ENCODE measurements at regions of chr4 and their contacts with region 1.

Region 1: GRCh38 chr4:22969314-22969896 is 276.7 kb downstream of the GBA3 start:
- DNase-seq: peak; percentile 86
- ATAC-seq: peak; percentile 85
- H3K4me3 ChIP-seq: peak overlapping the region; percentile 21; the same call in 1 of the 2 replicates
- H3K27ac ChIP-seq: peak overlapping the region; percentile 81
- H3K4me1 ChIP-seq: peaks cover 32% of the 10 kb centered on the region
- H3K27me3 ChIP-seq: no peaks in the 10 kb centered on the region
- CTCF ChIP-seq: no peak

Region 2: DNA sequence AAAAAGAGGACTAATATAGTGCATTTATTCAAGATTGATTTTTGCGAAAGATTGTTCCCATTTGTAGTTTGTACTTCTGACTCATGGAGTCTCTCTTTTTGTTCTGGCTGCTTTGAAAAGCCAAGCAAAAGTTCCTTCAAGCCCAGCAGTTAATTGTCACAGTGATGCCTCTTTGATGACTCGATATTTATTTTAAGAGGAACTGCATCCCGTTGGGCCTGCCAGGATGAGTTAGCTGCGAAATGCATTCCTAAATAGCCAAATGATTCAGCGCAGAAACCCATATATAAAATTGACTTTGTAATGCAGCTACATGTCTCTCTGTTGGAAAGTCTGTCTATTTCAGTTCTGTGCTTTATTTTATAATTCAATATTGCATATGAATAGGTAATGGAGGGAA is 18.5 kb after region 1 on chr4:
- CTCF ChIA-PET with region 1: no interaction called
- POLR2A ChIA-PET with region 1: interaction called, 4 read pairs
- intact Hi-C with region 1: loop called (anchors 1 kb)
- DNase-seq: peak; percentile 86
- ATAC-seq: peak; percentile 85
- H3K4me3 ChIP-seq: no peak overlapping the region
- H3K27ac ChIP-seq: peak overlapping the region; percentile 55
- H3K4me1 ChIP-seq: peaks cover 36% of the 10 kb centered on the region
- H3K27me3 ChIP-seq: no peaks in the 10 kb centered on the region
- CTCF ChIP-seq: no peak

Region 3: GRCh38 chr4:23022032-23022431 is 52.6 kb after region 1 on chr4:
- CTCF ChIA-PET with region 1: no interaction called
- POLR2A ChIA-PET with region 1: no interaction called
- intact Hi-C with region 1: loop called (anchors 1 kb)
- DNase-seq: peak; percentile 89
- ATAC-seq: peak; percentile 94
- H3K4me3 ChIP-seq: no peak overlapping the region
- H3K27ac ChIP-seq: peak overlapping the region; percentile 78
- H3K4me1 ChIP-seq: peaks cover 15% of the 10 kb centered on the region
- H3K27me3 ChIP-seq: no peaks in the 10 kb centered on the region
- CTCF ChIP-seq: no peak

Region 4: GRCh38 chr4:23039813-23040212 is 70.4 kb after region 1 on chr4:
- CTCF ChIA-PET with region 1: no interaction called
- POLR2A ChIA-PET with region 1: no interaction called
- intact Hi-C with region 1: loop called (anchors 5 kb)
- DNase-seq: peak; percentile 43
- ATAC-seq: peak; percentile 66
- H3K4me3 ChIP-seq: no peak overlapping the region
- H3K27ac ChIP-seq: no peak overlapping the region
- H3K4me1 ChIP-seq: peaks cover 26% of the 10 kb centered on the region
- H3K27me3 ChIP-seq: no peaks in the 10 kb centered on the region
- CTCF ChIP-seq: no peak

Measured in PC-3 (cell line).